ENCODE measurements at regions of chr11 and their contacts with region 1.

Region 1: DNA sequence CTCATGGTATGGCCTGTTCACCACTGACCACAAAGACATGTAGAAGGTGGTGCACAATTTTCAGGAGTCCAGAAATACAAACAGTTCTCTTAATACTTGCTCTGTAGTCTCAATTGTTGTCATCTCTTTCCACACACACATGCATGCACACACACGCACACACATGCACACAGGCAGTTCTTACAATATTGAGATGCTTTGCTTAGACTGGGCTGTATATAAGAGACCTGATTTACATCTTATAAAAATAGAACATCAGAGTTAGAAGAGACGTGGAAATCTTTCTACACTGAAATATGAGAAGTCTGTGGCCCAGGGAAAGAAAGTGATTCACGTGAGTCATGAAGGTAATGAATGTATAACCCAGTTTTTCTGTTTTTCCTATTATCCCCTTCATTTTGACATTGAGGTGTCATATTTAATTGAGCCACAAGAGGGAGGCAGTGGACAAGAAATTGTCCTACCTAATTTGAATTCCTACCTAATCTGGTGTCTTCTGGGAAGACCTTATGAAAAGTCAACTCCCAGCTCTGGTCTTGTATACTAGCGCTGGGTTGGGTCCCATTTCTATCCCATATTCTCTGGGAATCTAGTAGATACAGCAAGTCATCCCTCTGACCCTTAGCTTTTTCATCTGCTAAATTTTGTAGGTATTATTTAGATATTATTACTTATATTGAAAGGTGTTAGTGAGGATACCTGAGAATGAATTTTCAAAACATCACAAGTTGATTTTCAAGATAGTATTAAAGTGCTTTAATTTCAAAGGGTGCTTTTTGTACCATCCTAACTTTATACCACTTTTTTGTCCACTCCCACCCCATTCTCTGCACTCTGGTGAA is 14.9 kb upstream of the MS4A4A start:
- H3K4me3 Mint-ChIP-seq: no peak overlapping the region
- H3K27ac Mint-ChIP-seq: peak overlapping the region; percentile 32
- H3K4me1 Mint-ChIP-seq: peaks cover 59% of the 10 kb centered on the region
- H3K27me3 Mint-ChIP-seq: no peaks in the 10 kb centered on the region

Region 2: GRCh38 chr11:60029015-60029632 is 236.5 kb before region 1 on chr11:
- intact Hi-C with region 1: no loop called
- H3K4me3 Mint-ChIP-seq: no peak overlapping the region
- H3K27ac Mint-ChIP-seq: no peak overlapping the region
- H3K4me1 Mint-ChIP-seq: no peaks in the 10 kb centered on the region
- H3K27me3 Mint-ChIP-seq: no peaks in the 10 kb centered on the region

Region 3: DNA sequence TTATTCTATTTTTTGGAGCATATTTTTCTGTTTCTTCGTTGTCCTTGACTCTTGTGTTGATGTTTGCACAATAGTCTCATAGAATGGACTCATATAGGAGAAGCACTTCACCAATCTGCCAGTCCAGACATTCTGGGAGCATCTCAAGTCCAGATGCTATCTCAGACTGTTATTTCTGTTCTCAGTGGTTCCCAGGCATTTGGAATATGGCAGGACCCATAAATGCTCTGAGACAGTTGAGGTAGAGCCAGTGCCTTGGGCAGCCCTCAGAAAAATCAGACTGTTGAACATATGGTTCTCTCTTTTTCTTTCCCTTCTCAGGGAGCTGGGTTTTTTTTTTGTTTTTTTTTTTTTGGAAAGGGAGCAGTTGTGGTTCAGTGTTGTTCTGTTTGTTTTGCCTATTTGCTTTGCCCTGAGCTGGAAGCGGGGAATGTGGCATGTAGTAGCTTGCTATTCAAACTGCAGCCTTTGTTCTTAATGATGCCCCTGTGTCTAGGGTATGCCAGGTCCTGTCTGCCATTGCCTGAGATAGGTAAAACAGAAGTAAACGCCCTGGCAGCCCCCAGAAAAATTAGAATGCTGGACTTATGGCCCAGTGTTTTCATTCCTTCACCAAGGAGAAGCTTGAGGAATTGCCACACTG is 180.8 kb before region 1 on chr11:
- intact Hi-C with region 1: no loop called
- H3K4me3 Mint-ChIP-seq: no peak overlapping the region
- H3K27ac Mint-ChIP-seq: no peak overlapping the region
- H3K4me1 Mint-ChIP-seq: peaks cover 12% of the 10 kb centered on the region
- H3K27me3 Mint-ChIP-seq: no peaks in the 10 kb centered on the region

Region 4: GRCh38 chr11:60310407-60311279 is 45.0 kb after region 1 on chr11:
- intact Hi-C with region 1: loop called (anchors 10 kb)
- H3K4me3 Mint-ChIP-seq: peak overlapping the region; percentile 17
- H3K27ac Mint-ChIP-seq: peak overlapping the region; percentile 86
- H3K4me1 Mint-ChIP-seq: peaks cover 57% of the 10 kb centered on the region
- H3K27me3 Mint-ChIP-seq: no peaks in the 10 kb centered on the region

Region 5: DNA sequence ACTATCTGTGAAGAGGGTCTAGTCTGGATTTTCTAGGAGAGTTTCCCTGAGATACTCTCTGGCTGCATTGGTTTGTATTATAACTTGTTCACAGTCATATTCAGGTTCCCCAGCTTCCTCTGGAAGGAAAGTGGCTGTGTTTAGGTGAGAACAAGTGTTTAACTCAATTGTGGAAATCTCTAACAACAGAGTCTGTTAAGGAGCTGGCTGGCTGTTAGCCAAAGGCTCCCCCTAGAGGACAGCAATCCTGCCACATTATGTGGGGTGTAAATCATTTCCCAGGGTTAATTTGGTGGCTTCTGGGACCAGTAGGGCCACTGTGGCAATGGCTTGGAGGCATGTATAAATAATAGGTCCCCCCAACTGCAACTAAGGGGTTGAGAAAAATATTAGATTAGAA is 79.9 kb after region 1 on chr11:
- intact Hi-C with region 1: loop called (anchors 5 kb)
- H3K4me3 Mint-ChIP-seq: no peak overlapping the region
- H3K27ac Mint-ChIP-seq: no peak overlapping the region
- H3K4me1 Mint-ChIP-seq: peaks cover 50% of the 10 kb centered on the region
- H3K27me3 Mint-ChIP-seq: peaks cover 2% of the 10 kb centered on the region

Region 6: DNA sequence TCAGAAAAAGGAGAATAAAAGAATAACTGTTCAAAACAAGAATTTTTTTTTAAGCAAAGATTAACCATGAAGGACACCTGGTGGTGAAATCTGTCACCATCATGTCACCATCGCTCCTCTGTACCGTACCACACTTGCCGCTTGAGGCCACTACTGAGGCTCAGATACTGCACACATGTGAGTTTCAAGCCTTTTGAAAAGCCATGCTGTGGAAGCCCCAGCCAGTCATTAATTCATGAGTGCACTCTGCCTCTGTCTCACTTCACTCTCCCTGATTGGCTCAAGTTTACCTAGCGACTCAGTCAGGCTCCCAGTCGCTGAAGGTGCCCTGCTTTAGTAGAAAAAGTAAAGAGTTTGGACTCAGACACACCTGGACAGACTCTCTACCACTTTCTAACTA is 220.4 kb after region 1 on chr11:
- intact Hi-C with region 1: loop called (anchors 1 kb)
- H3K4me3 Mint-ChIP-seq: no peak overlapping the region
- H3K27ac Mint-ChIP-seq: peak overlapping the region; percentile 35
- H3K4me1 Mint-ChIP-seq: peaks cover 34% of the 10 kb centered on the region
- H3K27me3 Mint-ChIP-seq: peaks cover 1% of the 10 kb centered on the region

Region 7: DNA sequence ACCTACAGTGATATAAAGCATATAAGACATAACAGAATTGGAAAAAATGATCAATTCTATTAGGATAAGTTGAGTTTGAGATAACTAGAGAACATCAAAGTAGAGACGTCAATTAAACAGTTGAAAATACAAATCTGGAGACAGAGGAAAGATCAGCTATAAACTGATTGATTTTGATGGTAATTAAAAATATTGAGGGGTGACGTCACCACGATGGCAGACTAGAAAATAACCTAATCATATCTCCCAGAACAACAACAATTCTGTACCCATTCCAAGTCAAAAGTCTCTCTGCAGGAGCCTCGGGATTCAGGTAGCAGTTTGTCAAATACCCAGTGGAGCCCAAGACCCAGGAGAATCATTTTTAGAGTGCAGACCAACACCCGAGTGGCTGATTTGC is 278.5 kb after region 1 on chr11:
- intact Hi-C with region 1: no loop called
- H3K4me3 Mint-ChIP-seq: no peak overlapping the region
- H3K27ac Mint-ChIP-seq: no peak overlapping the region
- H3K4me1 Mint-ChIP-seq: no peaks in the 10 kb centered on the region
- H3K27me3 Mint-ChIP-seq: no peaks in the 10 kb centered on the region

Region 8: GRCh38 chr11:60615497-60615896 is 349.9 kb after region 1 on chr11:
- intact Hi-C with region 1: loop called (anchors 1 kb)
- H3K4me3 Mint-ChIP-seq: no peak overlapping the region
- H3K27ac Mint-ChIP-seq: no peak overlapping the region
- H3K4me1 Mint-ChIP-seq: peaks cover 5% of the 10 kb centered on the region
- H3K27me3 Mint-ChIP-seq: no peaks in the 10 kb centered on the region

Measured in dendritic cell treated with granulocyte-macrophage colony-stimulating factor and Interleukin-4, amounts not matched to agents 40 ng/mL and 50 ng/mL, for 4 days (primary cell).